Heart right ventricle (tissue), 16 donors: ENCODE measurements at regions of chr18 and their contacts with region 1.

Region 1: GRCh38 chr18:45359338-45360001 is 255.8 kb upstream of the SLC14A2 start:
- DNase-seq: no peak
- ATAC-seq: peak in 4 of 8 donors; percentile 20 to 70 (median 58)
- H3K4me3 ChIP-seq: no peak overlapping the region
- H3K27ac ChIP-seq: no peak overlapping the region
- H3K4me1 ChIP-seq: peaks cover 0 to 14% (median 5%) of the 10 kb centered on the region in 9 donors
- H3K27me3 ChIP-seq: peaks cover 0 to 6% (median 0%) of the 10 kb centered on the region in 7 donors
- CTCF ChIP-seq: no peak

Region 2: DNA sequence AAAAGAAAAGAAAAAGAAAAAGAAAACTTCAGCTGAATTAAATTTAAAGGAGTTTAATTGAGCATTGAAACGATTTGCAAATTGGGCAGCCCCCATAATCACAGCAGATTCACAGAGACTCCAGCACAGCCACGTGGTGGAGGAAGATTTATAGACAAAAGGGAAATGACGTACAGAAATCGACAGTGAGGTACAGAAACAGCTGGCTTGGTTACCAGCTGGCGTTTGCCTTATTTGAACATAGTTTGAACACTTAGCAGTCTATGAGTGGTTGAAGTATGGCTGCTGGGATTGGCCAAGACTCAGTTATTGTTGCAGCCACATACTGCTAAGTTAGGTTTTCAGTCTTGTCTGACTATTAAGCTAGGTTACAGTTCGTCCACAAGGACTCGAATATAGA is 56.4 kb before region 1 on chr18:
- intact Hi-C with region 1: no loop called
- DNase-seq: no peak
- ATAC-seq: no peak
- H3K4me3 ChIP-seq: no peak overlapping the region
- H3K27ac ChIP-seq: no peak overlapping the region
- H3K4me1 ChIP-seq: peaks cover 0 to 12% (median 0%) of the 10 kb centered on the region in 9 donors
- H3K27me3 ChIP-seq: no peaks in the 10 kb centered on the region
- CTCF ChIP-seq: no peak

Region 3: DNA sequence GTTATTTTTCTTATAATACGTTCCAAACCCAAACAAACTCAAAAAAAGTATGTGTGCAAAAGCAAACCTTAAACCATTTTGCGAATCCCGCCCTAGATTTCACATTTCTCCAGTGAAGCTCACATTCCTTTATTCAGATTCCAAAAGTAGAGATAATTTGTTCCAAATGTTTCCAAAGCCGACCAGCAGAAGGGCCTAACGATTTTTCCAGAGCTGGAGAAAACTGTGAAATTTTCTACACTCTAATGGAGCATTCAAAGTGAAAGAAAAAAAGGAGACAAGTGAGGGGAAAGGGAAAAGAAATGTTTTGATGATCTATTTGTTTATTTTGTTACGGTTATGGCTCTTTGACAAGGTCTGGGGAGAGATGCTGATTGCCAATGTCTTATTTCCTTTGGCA is 30.7 kb before region 1 on chr18:
- intact Hi-C with region 1: loop called in 1 of 10 experiments (anchors 1 kb)
- DNase-seq: no peak
- ATAC-seq: peak in 3 of 8 donors; percentile 35 to 60 (median 41)
- H3K4me3 ChIP-seq: no peak overlapping the region
- H3K27ac ChIP-seq: peak overlapping the region in 3 of 10 donors; percentile 24 to 58 (median 41)
- H3K4me1 ChIP-seq: peaks cover 0 to 24% (median 4%) of the 10 kb centered on the region in 9 donors
- H3K27me3 ChIP-seq: no peaks in the 10 kb centered on the region
- CTCF ChIP-seq: no peak

Region 4: GRCh38 chr18:45416168-45416567 is 56.7 kb after region 1 on chr18:
- intact Hi-C with region 1: no loop called
- DNase-seq: no peak
- ATAC-seq: no peak
- H3K4me3 ChIP-seq: no peak overlapping the region
- H3K27ac ChIP-seq: no peak overlapping the region
- H3K4me1 ChIP-seq: no peaks in the 10 kb centered on the region
- H3K27me3 ChIP-seq: peaks cover 0 to 3% (median 0%) of the 10 kb centered on the region in 7 donors
- CTCF ChIP-seq: no peak